CD4-positive, alpha-beta T cell (primary cell): ENCODE measurements at regions of chr12 and their contacts with region 1.

Region 1: DNA sequence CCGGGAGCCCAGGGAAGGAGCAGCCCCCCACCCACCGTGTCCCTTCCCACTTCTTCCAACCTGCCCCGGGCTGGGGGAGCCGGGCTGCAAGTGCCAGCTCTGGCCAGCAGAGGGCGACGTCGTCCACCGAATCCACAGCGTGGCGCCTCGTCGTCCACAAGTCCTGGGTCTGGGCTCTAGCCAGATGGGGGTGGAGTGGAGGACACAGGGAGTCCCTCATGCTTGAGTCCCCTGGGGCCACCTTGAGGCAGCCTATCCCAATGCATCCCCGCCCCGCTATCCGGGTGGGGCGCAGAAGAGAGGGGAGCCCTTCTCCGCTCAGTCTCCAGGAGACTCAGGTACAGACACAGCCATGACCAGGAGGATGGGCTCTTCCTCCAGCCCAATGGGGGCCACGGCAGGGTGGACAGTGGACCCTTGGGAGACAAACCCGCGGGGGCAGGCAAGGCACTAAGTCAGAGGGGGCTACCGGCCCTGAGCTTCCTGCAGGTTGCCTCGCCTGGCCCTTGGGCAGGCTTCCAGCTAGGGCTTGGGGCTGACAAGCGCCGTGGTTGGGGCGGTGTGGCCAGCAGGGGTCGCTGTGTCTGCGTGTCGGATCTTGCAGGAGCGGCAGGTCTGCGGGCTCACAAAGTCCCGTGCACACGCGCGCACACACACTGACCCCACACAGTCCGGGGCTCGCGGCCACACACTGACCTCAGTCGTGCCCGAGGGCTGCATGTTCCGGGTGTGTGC is 5.5 kb downstream of the AQP5 start:
- DNase-seq: peak; percentile 87 to 97 (median 93)
- ATAC-seq: peak; percentile 85
- H3K4me3 ChIP-seq: peak overlapping the region; percentile 57
- H3K4me3 Mint-ChIP-seq: peak overlapping the region; percentile 70
- H3K27ac ChIP-seq: no peak overlapping the region
- H3K27ac Mint-ChIP-seq: no peak overlapping the region
- H3K4me1 ChIP-seq: peaks cover 17% of the 10 kb centered on the region
- H3K4me1 Mint-ChIP-seq: peaks cover 5% of the 10 kb centered on the region
- H3K27me3 ChIP-seq: peaks cover 22 to 46% of the 10 kb centered on the region in 2 experiments
- H3K27me3 Mint-ChIP-seq: peaks cover 47% of the 10 kb centered on the region
- CTCF ChIP-seq: peak; percentile 96

Region 2: GRCh38 chr12:49567611-49568441 is 399.4 kb before region 1 on chr12 and contains the start of gene MCRS1:
- CTCF ChIA-PET with region 1: no interaction called
- POLR2A ChIA-PET with region 1: no interaction called
- intact Hi-C with region 1: no loop called
- DNase-seq: peak; percentile 82 to 95 (median 88)
- ATAC-seq: peak; percentile 85
- H3K4me3 ChIP-seq: peak within 1 kb of the TSS; percentile 67
- H3K4me3 Mint-ChIP-seq: peak within 1 kb of the TSS; percentile 97
- H3K27ac ChIP-seq: peak within 1 kb of the TSS; percentile 93 to 94
- H3K27ac Mint-ChIP-seq: peak within 1 kb of the TSS; percentile 99
- H3K4me1 ChIP-seq: peaks cover 49% of the 10 kb centered on the region
- H3K4me1 Mint-ChIP-seq: peaks cover 71% of the 10 kb centered on the region
- H3K27me3 ChIP-seq: no peaks in the 10 kb centered on the region
- H3K27me3 Mint-ChIP-seq: no peaks in the 10 kb centered on the region
- CTCF ChIP-seq: no peak
- total RNA-seq, gene MCRS1: 49.0 to 56.4 TPM

Region 3: GRCh38 chr12:49882851-49883470 is 84.2 kb before region 1 on chr12:
- CTCF ChIA-PET with region 1: no interaction called
- POLR2A ChIA-PET with region 1: no interaction called
- intact Hi-C with region 1: no loop called
- DNase-seq: no peak
- ATAC-seq: no peak
- H3K4me3 ChIP-seq: no peak overlapping the region
- H3K4me3 Mint-ChIP-seq: no peak overlapping the region
- H3K27ac ChIP-seq: no peak overlapping the region
- H3K27ac Mint-ChIP-seq: no peak overlapping the region
- H3K4me1 ChIP-seq: no peaks in the 10 kb centered on the region
- H3K4me1 Mint-ChIP-seq: no peaks in the 10 kb centered on the region
- H3K27me3 ChIP-seq: peaks cover 4 to 22% of the 10 kb centered on the region in 2 experiments
- H3K27me3 Mint-ChIP-seq: peaks cover 8% of the 10 kb centered on the region
- CTCF ChIP-seq: no peak

Region 4: GRCh38 chr12:49952391-49953055 is 14.7 kb before region 1 on chr12:
- CTCF ChIA-PET with region 1: interaction called, 19 read pairs
- POLR2A ChIA-PET with region 1: no interaction called
- intact Hi-C with region 1: no loop called
- DNase-seq: no peak
- ATAC-seq: no peak
- H3K4me3 ChIP-seq: no peak overlapping the region
- H3K4me3 Mint-ChIP-seq: no peak overlapping the region
- H3K27ac ChIP-seq: no peak overlapping the region
- H3K27ac Mint-ChIP-seq: no peak overlapping the region
- H3K4me1 ChIP-seq: no peaks in the 10 kb centered on the region
- H3K4me1 Mint-ChIP-seq: no peaks in the 10 kb centered on the region
- H3K27me3 ChIP-seq: peaks cover 26 to 47% of the 10 kb centered on the region in 2 experiments
- H3K27me3 Mint-ChIP-seq: peaks cover 57% of the 10 kb centered on the region
- CTCF ChIP-seq: no peak

Region 5: DNA sequence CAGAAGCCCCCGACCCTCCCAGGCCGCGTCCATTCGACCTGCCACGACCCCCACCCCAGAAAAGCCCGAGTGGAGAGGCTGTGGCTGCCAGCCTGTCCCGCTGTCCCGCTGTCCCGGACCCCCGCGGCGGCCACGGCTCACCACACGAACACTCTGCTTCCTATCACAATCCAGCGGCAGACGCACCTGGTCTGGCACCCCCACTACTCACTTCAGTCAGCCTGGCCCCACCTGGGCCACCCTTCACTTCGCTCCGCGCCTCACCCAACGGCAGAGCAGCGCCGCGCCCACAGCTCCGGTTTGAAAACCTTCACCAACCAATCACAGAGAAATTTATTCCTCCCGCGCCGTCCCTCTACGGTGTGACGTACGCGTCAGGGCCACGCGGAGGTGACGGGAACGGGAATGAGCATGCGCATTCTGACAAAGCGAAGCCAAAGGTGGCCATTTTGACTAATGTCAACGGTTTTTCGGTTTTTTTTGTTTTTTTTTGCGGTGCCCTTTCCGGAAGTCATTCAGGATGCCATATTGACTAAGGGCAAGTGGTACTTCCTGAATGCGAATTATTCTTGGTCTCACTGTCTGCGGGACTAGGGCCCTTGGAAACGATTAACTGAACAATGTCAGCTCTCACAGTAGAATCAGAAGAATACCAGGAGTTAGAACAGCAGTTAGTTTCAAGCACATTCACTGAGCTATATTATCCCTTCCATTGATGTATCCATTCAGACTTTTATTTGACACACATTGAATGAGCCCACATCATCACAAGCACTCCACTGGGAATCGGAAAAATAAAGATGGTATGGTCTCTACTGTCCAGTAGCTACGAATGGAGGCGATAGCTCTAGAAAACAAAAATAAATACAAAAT is 58.2 kb after region 1 on chr12 and contains the start of gene RACGAP1:
- CTCF ChIA-PET with region 1: interaction called, 13 read pairs
- POLR2A ChIA-PET with region 1: no interaction called
- intact Hi-C with region 1: no loop called
- DNase-seq: peak; percentile 88 to 99 (median 94)
- ATAC-seq: peak; percentile 97
- H3K4me3 ChIP-seq: peak within 1 kb of the TSS; percentile 75
- H3K4me3 Mint-ChIP-seq: peak within 1 kb of the TSS; percentile 94
- H3K27ac ChIP-seq: peak within 1 kb of the TSS; percentile 16 to 28
- H3K27ac Mint-ChIP-seq: peak within 1 kb of the TSS; percentile 66
- H3K4me1 ChIP-seq: peaks cover 18% of the 10 kb centered on the region
- H3K4me1 Mint-ChIP-seq: peaks cover 15% of the 10 kb centered on the region
- H3K27me3 ChIP-seq: no peaks in the 10 kb centered on the region
- H3K27me3 Mint-ChIP-seq: peaks cover 13% of the 10 kb centered on the region
- CTCF ChIP-seq: no peak
- total RNA-seq, gene RACGAP1: 3.0 to 3.3 TPM

Region 6: GRCh38 chr12:50055831-50056638 is 88.8 kb after region 1 on chr12:
- CTCF ChIA-PET with region 1: interaction called, 36 read pairs
- POLR2A ChIA-PET with region 1: interaction called, 7 read pairs
- intact Hi-C with region 1: loop called (anchors 1 kb)
- DNase-seq: peak; percentile 29 to 77 (median 44)
- ATAC-seq: peak; percentile 67
- H3K4me3 ChIP-seq: peak overlapping the region; percentile 3
- H3K4me3 Mint-ChIP-seq: peak overlapping the region; percentile 93
- H3K27ac ChIP-seq: no peak overlapping the region
- H3K27ac Mint-ChIP-seq: no peak overlapping the region
- H3K4me1 ChIP-seq: peaks cover 40% of the 10 kb centered on the region
- H3K4me1 Mint-ChIP-seq: peaks cover 40% of the 10 kb centered on the region
- H3K27me3 ChIP-seq: peaks cover 44 to 48% of the 10 kb centered on the region in 2 experiments
- H3K27me3 Mint-ChIP-seq: peaks cover 68% of the 10 kb centered on the region
- CTCF ChIP-seq: peak; percentile 88

Region 7: GRCh38 chr12:50174971-50175715 is 207.9 kb after region 1 on chr12:
- CTCF ChIA-PET with region 1: interaction called, 3 read pairs
- POLR2A ChIA-PET with region 1: no interaction called
- intact Hi-C with region 1: loop called in 1 of 2 experiments (anchors 5 kb)
- DNase-seq: peak in 5 of 14 experiments; percentile 8 to 81 (median 69)
- ATAC-seq: peak; percentile 57
- H3K4me3 ChIP-seq: no peak overlapping the region
- H3K4me3 Mint-ChIP-seq: no peak overlapping the region
- H3K27ac ChIP-seq: no peak overlapping the region
- H3K27ac Mint-ChIP-seq: no peak overlapping the region
- H3K4me1 ChIP-seq: no peaks in the 10 kb centered on the region
- H3K4me1 Mint-ChIP-seq: no peaks in the 10 kb centered on the region
- H3K27me3 ChIP-seq: no peaks in the 10 kb centered on the region
- H3K27me3 Mint-ChIP-seq: no peaks in the 10 kb centered on the region
- CTCF ChIP-seq: peak; percentile 90

Region 8: DNA sequence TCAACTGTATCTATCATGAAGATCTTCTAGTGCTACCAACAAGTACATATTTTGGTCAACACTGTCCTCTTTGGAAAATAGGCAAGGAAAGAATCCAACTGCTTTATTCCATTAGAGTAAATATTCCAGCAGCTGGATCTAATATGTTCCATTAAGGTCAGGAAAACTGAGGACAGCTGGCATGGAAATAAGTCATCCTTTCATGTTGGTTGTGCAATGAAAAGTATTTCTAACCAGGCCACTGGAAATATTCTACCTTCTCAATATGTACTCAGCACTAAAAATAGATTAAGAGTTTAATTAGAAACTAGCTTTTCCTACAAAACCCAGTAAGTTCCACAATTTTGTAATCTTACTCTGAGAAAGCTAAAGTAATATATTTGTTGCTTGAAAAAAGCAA is 1004.7 kb after region 1 on chr12:
- CTCF ChIA-PET with region 1: no interaction called
- POLR2A ChIA-PET with region 1: no interaction called
- intact Hi-C with region 1: no loop called
- DNase-seq: no peak
- ATAC-seq: no peak
- H3K4me3 ChIP-seq: no peak overlapping the region
- H3K4me3 Mint-ChIP-seq: no peak overlapping the region
- H3K27ac ChIP-seq: no peak overlapping the region
- H3K27ac Mint-ChIP-seq: no peak overlapping the region
- H3K4me1 ChIP-seq: no peaks in the 10 kb centered on the region
- H3K4me1 Mint-ChIP-seq: no peaks in the 10 kb centered on the region
- H3K27me3 ChIP-seq: no peaks in the 10 kb centered on the region
- H3K27me3 Mint-ChIP-seq: no peaks in the 10 kb centered on the region
- CTCF ChIP-seq: no peak